AG04449 (cell line): ENCODE measurements at regions of chr10 and their contacts with region 1.

Region 1: GRCh38 chr10:35119378-35119777 is 7.3 kb upstream of the CREM start:
- DNase-seq: no peak
- H3K4me3 ChIP-seq: no peak overlapping the region
- CTCF ChIP-seq: no peak

Region 2: GRCh38 chr10:34994565-34995142 is 124.7 kb before region 1 on chr10:
- CTCF ChIA-PET with region 1: interaction called, 11 read pairs
- POLR2A ChIA-PET with region 1: no interaction called
- DNase-seq: no peak
- H3K4me3 ChIP-seq: no peak overlapping the region
- CTCF ChIP-seq: peak; percentile 34

Region 3: DNA sequence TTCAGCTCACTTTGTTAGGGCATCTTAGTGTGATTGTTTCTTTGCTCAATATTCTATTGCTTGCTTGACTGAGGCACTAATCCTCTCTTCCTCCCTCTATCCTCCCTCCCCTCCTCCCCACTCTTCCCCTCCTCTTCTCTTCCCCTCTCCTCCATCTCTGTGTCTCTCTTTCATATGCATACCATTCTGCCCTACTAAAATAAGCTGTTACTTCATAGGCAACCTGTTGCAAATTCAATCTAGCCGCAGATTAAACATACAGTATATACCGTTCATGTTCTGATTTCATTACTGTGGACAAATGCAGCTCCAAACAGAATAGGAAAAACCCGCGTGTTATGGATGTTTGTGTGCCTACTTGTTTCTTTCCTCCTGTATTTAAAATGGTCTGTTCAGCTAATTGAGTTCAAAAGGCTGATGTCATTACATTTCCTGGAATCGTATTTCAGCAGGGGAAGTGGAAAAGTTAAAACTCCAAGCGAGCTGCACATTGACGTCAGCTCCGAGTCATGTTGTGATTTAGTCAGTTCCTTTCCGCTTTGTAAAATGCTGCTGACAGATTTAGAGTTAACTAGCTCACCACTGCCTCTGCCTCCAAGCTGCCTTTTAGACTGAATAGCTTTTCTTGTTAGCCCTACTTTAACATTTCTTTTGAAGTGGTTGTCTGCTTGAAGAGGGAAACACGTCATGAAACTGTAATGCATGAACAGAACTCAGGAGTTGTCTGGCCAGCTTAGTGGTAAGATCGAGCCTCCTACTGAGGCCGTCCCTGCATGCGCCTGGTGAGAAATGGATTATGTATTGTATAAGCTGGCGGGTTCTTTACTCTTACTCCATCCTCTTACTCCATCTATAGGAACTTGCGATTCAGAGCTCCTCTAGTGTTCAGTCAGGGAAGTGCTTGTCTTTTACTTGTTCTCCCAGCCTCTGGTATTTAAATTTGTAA is 76.3 kb after region 1 on chr10:
- CTCF ChIA-PET with region 1: interaction called, 34 read pairs
- POLR2A ChIA-PET with region 1: no interaction called
- DNase-seq: peak; percentile 82
- H3K4me3 ChIP-seq: peak overlapping the region; percentile 50
- CTCF ChIP-seq: peak; percentile 52

Region 4: GRCh38 chr10:35218339-35218955 is 99.1 kb after region 1 on chr10:
- CTCF ChIA-PET with region 1: interaction called, 283 read pairs
- POLR2A ChIA-PET with region 1: no interaction called
- DNase-seq: no peak
- H3K4me3 ChIP-seq: no peak overlapping the region
- CTCF ChIP-seq: peak; percentile 71

Region 5: DNA sequence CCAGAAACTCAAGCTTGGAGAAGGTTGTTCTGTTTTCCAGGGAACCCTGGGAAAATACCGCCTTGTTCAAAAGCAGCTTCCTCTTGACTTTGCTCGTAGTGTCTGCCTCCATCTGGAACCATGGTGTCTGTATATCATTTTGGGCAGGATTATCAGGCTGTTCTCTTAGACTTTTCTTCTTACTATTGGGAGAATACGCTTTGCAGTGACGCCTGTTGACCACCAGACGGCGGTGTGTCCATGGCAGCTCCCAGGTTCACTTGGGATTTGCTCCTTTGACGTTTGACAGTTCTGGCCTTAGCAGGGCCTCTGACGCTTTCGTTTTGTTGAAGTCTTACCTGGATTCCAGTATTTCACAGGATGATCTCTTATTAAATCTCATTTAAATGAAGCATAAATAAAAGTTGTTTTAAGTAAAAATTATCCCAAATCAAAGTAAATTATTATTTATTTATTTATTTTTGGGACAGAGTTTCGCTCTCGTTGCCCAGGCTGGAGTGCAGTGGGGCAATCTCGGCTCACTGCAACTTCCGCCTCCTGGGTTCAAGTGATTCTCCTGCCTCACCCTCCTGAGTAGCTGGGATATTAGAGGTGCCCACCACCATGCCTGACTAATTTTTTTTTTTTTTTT is 444.0 kb after region 1 on chr10:
- CTCF ChIA-PET with region 1: interaction called, 11 read pairs
- POLR2A ChIA-PET with region 1: no interaction called
- DNase-seq: no peak
- H3K4me3 ChIP-seq: no peak overlapping the region
- CTCF ChIP-seq: peak; percentile 95